MCF 10A (cell line): ENCODE measurements at regions of chr5 and their contacts with region 1.

Region 1: GRCh38 chr5:57705769-57706168 is 223.2 kb upstream of the ACTBL2 start:
- DNase-seq: no peak
- H3K4me3 Mint-ChIP-seq: no peak overlapping the region
- H3K27ac Mint-ChIP-seq: no peak overlapping the region
- H3K4me1 Mint-ChIP-seq: no peaks in the 10 kb centered on the region
- H3K27me3 Mint-ChIP-seq: no peaks in the 10 kb centered on the region
- CTCF ChIP-seq: no peak

Region 2: GRCh38 chr5:57692582-57693487 is 12.9 kb before region 1 on chr5:
- CTCF ChIA-PET with region 1: interaction called, 3 read pairs
- POLR2A ChIA-PET with region 1: interaction called, 16 read pairs
- intact Hi-C with region 1: no loop called
- DNase-seq: peak; percentile 98
- H3K4me3 Mint-ChIP-seq: peak overlapping the region; percentile 68
- H3K27ac Mint-ChIP-seq: peak overlapping the region; percentile 58
- H3K4me1 Mint-ChIP-seq: peaks cover 22% of the 10 kb centered on the region
- H3K27me3 Mint-ChIP-seq: no peaks in the 10 kb centered on the region
- CTCF ChIP-seq: no peak

Region 3: DNA sequence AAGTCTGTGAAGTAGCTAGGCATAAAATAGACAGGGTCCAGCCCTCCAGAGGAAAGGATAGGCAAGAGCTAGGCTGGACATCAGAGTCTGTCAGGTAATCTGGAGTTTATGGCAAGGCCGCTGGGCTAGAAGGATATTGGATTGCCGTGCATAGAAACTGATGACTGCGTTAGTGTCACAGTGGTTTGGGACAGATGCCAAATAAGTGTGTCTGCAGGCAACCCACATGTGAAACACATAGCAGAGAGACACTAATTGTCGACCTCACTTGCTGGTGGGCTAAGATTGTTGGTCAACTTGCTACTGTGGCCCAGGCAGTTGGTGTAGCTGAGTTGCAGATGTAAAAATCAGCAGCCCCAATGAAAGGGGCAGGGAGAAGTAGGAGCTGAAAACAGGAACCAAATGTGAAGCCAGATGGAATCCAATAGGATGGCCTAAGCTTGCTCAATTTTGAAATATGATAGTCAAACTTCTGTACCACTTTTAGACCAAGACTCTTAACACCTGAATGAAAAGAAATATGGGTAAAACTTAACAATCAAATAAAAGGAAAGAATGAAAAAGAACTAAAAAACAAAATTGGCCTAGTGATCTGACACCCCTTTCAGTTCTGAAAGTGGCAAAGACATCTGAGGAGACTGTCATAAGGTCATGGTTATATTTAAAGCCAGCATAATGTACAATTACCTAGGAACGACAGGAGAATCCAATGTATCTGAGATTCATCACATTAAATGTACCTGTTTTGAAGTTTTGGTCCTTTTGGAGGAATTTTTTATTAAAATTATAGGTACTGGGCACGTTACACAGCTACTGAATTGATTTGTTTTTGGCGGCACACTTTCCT is 20.1 kb after region 1 on chr5:
- CTCF ChIA-PET with region 1: no interaction called
- POLR2A ChIA-PET with region 1: no interaction called
- intact Hi-C with region 1: no loop called
- DNase-seq: no peak
- H3K4me3 Mint-ChIP-seq: no peak overlapping the region
- H3K27ac Mint-ChIP-seq: no peak overlapping the region
- H3K4me1 Mint-ChIP-seq: peaks cover 9% of the 10 kb centered on the region
- H3K27me3 Mint-ChIP-seq: no peaks in the 10 kb centered on the region
- CTCF ChIP-seq: no peak